Activated T-helper 2 cell treated with anti-CD3 and anti-CD28 coated beads, Interferon-gamma antibody, Interleukin-2, Interleukin-4, amounts not matched to agents 10 μg/mL and 5 μg/mL and 100 μg/mL, durations not matched to agents 14 hours and 24 hours and 36 hours (primary cell): ENCODE measurements at regions of chr10 and their contacts with region 1.

Region 1: GRCh38 chr10:29496341-29497162 is 138.2 kb downstream of the SVIL start:
- DNase-seq: peak; percentile 34
- H3K4me3 Mint-ChIP-seq: no peak overlapping the region
- H3K27ac Mint-ChIP-seq: peak overlapping the region; percentile 9
- H3K4me1 Mint-ChIP-seq: peaks cover 13% of the 10 kb centered on the region
- H3K27me3 Mint-ChIP-seq: no peaks in the 10 kb centered on the region

Region 2: GRCh38 chr10:29377333-29377961 is 119.1 kb before region 1 on chr10:
- intact Hi-C with region 1: loop called (anchors 1 kb)
- DNase-seq: no peak
- H3K4me3 Mint-ChIP-seq: no peak overlapping the region
- H3K27ac Mint-ChIP-seq: no peak overlapping the region
- H3K4me1 Mint-ChIP-seq: peaks cover 4% of the 10 kb centered on the region
- H3K27me3 Mint-ChIP-seq: peaks cover 10% of the 10 kb centered on the region

Region 3: DNA sequence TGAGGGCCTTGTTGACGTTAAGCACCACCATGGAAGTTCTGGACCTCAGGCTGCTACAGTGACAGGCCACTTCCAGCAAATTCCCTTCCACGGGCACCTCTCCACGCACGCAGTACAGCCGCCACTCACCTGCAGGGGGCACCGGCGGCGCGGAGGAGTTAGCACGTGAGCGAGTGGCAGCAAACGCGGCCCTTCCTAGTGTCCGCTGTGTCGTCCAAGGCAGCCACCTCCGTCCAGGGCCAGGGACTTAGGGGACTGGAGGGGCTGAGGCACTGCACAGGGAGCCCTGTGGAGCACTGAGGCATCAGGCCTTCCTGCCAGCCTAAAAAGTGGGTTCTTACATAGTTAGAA is 26.2 kb before region 1 on chr10:
- intact Hi-C with region 1: loop called (anchors 2 kb)
- DNase-seq: no peak
- H3K4me3 Mint-ChIP-seq: no peak overlapping the region
- H3K27ac Mint-ChIP-seq: no peak overlapping the region
- H3K4me1 Mint-ChIP-seq: peaks cover 28% of the 10 kb centered on the region
- H3K27me3 Mint-ChIP-seq: no peaks in the 10 kb centered on the region

Region 4: GRCh38 chr10:29482591-29483431 is 13.7 kb before region 1 on chr10:
- intact Hi-C with region 1: loop called (anchors 1 kb)
- DNase-seq: peak; percentile 22
- H3K4me3 Mint-ChIP-seq: peak overlapping the region; percentile 0
- H3K27ac Mint-ChIP-seq: peak overlapping the region; percentile 74
- H3K4me1 Mint-ChIP-seq: peaks cover 56% of the 10 kb centered on the region
- H3K27me3 Mint-ChIP-seq: no peaks in the 10 kb centered on the region

Region 5: GRCh38 chr10:29535012-29535777 is 38.6 kb after region 1 on chr10:
- intact Hi-C with region 1: no loop called
- DNase-seq: no peak
- H3K4me3 Mint-ChIP-seq: no peak overlapping the region
- H3K27ac Mint-ChIP-seq: no peak overlapping the region
- H3K4me1 Mint-ChIP-seq: peaks cover 8% of the 10 kb centered on the region
- H3K27me3 Mint-ChIP-seq: no peaks in the 10 kb centered on the region